ENCODE measurements at regions of chr9 and their contacts with region 1.

Region 1: GRCh38 chr9:120791161-120791560 is 2.1 kb downstream of the FBXW2 start:
- DNase-seq: no peak
- ATAC-seq: no peak
- H3K4me3 ChIP-seq: no peak overlapping the region
- H3K4me3 Mint-ChIP-seq: peak overlapping the region; percentile 51 to 89 (median 88)
- H3K27ac ChIP-seq: no peak overlapping the region
- H3K27ac Mint-ChIP-seq: peak overlapping the region in 1 of 2 donors; percentile 71
- H3K4me1 ChIP-seq: peaks cover 26 to 30% of the 10 kb centered on the region in 2 experiments
- H3K4me1 Mint-ChIP-seq: peaks cover 73 to 75% (median 74%) of the 10 kb centered on the region in 3 donors
- H3K27me3 ChIP-seq: no peaks in the 10 kb centered on the region
- H3K27me3 Mint-ChIP-seq: no peaks in the 10 kb centered on the region

Region 2: DNA sequence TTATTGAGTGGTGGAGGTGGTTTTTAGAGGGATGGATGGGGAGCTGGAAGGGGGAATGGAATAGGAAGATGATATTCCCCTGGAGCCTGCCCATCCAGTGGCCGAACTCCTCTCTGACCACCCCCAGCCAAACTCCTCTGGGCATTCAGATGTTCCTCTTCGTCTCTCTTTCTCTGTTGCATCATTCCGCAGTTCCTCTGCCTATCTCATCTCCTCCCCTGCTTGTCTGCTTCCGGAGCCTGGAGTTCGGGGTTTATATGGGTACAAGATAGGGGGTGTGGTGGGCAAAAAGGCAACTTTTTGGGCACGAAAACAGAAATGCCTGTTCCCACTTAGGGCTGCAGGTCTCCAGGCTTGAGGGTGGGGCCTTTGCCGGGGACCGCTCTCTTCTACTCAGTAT is 199.0 kb before region 1 on chr9:
- CTCF ChIA-PET with region 1: no interaction called
- POLR2A ChIA-PET with region 1: interaction called in 1 of 2 experiments, 10 read pairs
- DNase-seq: no peak
- ATAC-seq: no peak
- H3K4me3 ChIP-seq: no peak overlapping the region
- H3K4me3 Mint-ChIP-seq: no peak overlapping the region
- H3K27ac ChIP-seq: no peak overlapping the region
- H3K27ac Mint-ChIP-seq: no peak overlapping the region
- H3K4me1 ChIP-seq: no peaks in the 10 kb centered on the region
- H3K4me1 Mint-ChIP-seq: no peaks in the 10 kb centered on the region
- H3K27me3 ChIP-seq: peaks cover 0 to 7% of the 10 kb centered on the region in 2 experiments
- H3K27me3 Mint-ChIP-seq: no peaks in the 10 kb centered on the region

Region 3: DNA sequence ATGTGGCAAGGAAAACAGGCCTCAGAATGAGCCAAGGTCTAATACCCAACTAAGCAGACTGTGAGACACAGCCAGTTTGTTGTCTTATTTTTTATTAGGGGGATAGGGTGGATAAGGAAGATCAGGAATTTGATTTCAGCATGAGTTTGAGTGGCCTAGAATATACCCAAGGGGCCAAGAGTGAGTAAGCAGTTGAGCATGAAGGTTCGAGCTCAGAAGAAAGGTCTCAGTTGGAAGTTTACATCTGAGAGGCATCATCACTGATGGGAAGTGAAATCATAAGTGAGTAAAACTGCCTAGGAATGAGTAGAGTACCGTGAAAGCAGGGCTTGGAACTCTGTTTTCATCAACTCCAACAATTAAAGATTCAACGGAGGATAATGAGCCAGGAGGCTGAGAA is 39.0 kb after region 1 on chr9:
- CTCF ChIA-PET with region 1: no interaction called
- POLR2A ChIA-PET with region 1: interaction called in 1 of 2 experiments, 10 read pairs
- DNase-seq: no peak
- ATAC-seq: no peak
- H3K4me3 ChIP-seq: no peak overlapping the region
- H3K4me3 Mint-ChIP-seq: no peak overlapping the region
- H3K27ac ChIP-seq: no peak overlapping the region
- H3K27ac Mint-ChIP-seq: no peak overlapping the region
- H3K4me1 ChIP-seq: no peaks in the 10 kb centered on the region
- H3K4me1 Mint-ChIP-seq: peaks cover 0 to 2% (median 2%) of the 10 kb centered on the region in 3 donors
- H3K27me3 ChIP-seq: no peaks in the 10 kb centered on the region
- H3K27me3 Mint-ChIP-seq: no peaks in the 10 kb centered on the region